ENCODE measurements at regions of chr1 and their contacts with region 1.

Region 1: GRCh38 chr1:94396356-94397010 is 21.7 kb upstream of the ABCD3 start:
- DNase-seq: peak; percentile 39

Region 2: GRCh38 chr1:94379615-94380014 is 16.9 kb before region 1 on chr1:
- CTCF ChIA-PET with region 1: no interaction called
- POLR2A ChIA-PET with region 1: no interaction called
- DNase-seq: no peak

Region 3: GRCh38 chr1:94417978-94418663 is 21.6 kb after region 1 on chr1 and contains the start of gene ABCD3:
- CTCF ChIA-PET with region 1: interaction called, 3 read pairs
- POLR2A ChIA-PET with region 1: interaction called, 11 read pairs
- DNase-seq: peak; percentile 96

Region 4: DNA sequence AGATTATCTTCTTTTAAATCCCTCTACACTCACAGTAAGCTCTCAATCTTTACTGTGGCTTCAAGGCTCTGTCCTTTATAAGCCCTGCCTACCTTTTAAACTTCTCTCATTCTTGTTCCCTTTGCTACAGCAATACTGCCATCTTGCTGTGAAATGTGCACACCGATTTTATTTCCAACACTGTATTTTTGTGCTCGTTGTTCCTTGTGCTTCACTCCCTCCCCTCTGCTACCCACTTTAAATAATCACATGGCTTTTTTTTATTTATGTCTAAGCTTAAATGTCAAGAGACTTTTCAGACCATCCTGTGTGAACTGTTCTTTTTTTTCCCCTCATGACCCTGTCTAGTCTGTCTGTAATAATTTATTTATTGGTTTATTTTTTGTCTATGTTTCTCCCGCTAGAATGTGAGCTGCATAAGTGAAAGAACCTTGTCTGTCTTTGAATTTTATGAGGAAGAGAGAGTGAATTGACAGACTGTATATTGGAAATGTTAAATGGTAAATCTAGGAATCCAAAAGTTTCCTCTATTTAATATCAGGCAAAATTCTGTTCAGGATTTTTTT is 67.4 kb after region 1 on chr1:
- CTCF ChIA-PET with region 1: interaction called, 12 read pairs
- POLR2A ChIA-PET with region 1: no interaction called
- DNase-seq: peak; percentile 63

Measured in HEK293T (cell line).